ENCODE measurements at regions of chr3 and their contacts with region 1.

Region 1: DNA sequence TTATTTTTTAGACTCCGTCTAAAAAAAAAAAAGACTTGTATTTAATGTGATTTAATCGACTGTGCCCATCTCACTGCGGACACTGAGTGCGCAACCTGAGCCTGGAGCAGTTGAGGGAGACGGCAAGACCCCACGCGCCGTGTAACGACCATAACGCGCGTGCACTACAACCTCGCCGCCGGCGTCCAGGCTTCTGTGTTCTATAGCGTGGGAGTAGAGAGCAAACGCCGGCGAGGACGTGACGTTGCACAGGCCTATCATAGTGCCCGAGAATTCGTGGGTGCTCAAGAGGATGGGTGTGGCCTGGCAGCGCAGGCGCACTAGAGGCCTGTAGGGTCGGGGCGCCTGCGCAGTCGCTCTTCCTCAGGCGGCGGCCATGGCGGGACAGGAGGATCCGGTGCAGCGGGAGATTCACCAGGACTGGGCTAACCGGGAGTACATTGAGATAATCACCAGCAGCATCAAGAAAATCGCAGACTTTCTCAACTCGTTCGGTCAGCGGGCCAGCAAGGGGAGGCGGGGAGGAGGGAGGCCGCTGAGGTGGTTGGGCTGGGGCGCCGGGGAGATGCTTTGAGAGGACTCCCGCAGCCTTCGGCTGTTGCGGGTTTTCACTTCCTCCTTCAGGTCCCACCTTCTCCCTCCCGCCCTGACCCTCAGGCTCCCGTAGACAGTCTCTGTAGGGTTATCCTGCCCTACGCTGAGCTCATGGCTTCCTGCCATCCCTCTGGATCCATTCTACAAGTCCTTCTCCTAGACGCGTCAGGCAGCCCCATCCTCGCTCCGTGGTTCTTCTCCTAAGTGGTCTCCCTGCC is at the start of gene BRK1:
- DNase-seq: peak; percentile 85
- ATAC-seq: peak; percentile 96
- H3K4me3 Mint-ChIP-seq: peak within 1 kb of the TSS; percentile 100
- H3K27ac Mint-ChIP-seq: peak within 1 kb of the TSS; percentile 99
- H3K4me1 Mint-ChIP-seq: peaks cover 40% of the 10 kb centered on the region
- H3K27me3 Mint-ChIP-seq: no peaks in the 10 kb centered on the region
- CTCF ChIP-seq: no peak
- total RNA-seq, gene BRK1: 123 and 141 TPM in 2 replicates

Region 2: GRCh38 chr3:9986237-9986725 is 129.3 kb before region 1 on chr3:
- CTCF ChIA-PET with region 1: no interaction called
- POLR2A ChIA-PET with region 1: interaction called, 5 read pairs
- intact Hi-C with region 1: loop called (anchors 2 kb)
- DNase-seq: no peak
- ATAC-seq: peak; percentile 28
- H3K4me3 Mint-ChIP-seq: peak overlapping the region; percentile 98
- H3K27ac Mint-ChIP-seq: peak overlapping the region; percentile 100
- H3K4me1 Mint-ChIP-seq: peaks cover 24% of the 10 kb centered on the region
- H3K27me3 Mint-ChIP-seq: no peaks in the 10 kb centered on the region
- CTCF ChIP-seq: no peak

Region 3: DNA sequence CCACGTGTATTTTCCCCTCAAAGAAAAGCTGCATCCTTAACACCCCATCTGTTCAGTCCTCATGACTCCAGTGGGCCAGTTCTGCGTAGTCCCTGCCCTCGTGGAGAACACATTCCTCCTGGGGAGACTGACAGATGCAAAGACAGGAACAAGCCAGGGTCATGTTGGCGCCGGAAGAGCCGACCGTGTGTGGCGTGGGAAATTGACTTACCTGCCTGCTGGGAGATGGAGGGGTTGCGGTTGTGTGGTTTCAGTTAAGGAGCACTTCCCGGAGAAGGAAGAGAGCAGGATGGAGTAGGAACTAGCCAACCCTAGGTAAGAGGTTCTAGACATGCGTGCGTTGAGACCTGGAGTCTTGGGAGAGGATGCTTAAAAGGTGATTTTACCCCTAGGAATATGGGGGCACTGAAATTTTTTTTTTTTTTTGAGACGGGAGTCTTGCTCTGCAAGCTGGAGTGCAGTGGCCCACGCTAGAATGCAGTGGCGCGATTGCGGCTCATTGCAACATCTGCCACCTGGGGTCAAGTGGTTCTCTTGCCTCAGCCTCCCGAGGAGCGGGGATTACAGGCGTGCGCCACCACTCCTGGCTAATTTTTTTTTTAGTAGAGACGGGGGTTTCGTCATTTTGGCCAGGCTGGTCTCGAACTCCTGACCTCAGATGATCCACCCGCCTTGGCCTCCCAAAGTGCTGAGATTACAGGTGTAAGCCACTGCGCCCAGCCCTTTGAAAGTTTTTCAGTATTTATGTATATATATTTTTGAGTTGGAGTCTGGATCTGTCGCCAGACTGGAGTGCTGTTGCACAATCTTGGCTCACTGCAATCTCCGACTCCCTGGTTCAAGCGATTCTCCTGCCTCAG is 27.4 kb after region 1 on chr3:
- CTCF ChIA-PET with region 1: no interaction called
- POLR2A ChIA-PET with region 1: interaction called, 32 read pairs
- intact Hi-C with region 1: loop called (anchors 1 kb)
- DNase-seq: no peak
- ATAC-seq: no peak
- H3K4me3 Mint-ChIP-seq: peak overlapping the region; percentile 97
- H3K27ac Mint-ChIP-seq: peak overlapping the region; percentile 95
- H3K4me1 Mint-ChIP-seq: peaks cover 42% of the 10 kb centered on the region
- H3K27me3 Mint-ChIP-seq: no peaks in the 10 kb centered on the region
- CTCF ChIP-seq: no peak

Region 4: DNA sequence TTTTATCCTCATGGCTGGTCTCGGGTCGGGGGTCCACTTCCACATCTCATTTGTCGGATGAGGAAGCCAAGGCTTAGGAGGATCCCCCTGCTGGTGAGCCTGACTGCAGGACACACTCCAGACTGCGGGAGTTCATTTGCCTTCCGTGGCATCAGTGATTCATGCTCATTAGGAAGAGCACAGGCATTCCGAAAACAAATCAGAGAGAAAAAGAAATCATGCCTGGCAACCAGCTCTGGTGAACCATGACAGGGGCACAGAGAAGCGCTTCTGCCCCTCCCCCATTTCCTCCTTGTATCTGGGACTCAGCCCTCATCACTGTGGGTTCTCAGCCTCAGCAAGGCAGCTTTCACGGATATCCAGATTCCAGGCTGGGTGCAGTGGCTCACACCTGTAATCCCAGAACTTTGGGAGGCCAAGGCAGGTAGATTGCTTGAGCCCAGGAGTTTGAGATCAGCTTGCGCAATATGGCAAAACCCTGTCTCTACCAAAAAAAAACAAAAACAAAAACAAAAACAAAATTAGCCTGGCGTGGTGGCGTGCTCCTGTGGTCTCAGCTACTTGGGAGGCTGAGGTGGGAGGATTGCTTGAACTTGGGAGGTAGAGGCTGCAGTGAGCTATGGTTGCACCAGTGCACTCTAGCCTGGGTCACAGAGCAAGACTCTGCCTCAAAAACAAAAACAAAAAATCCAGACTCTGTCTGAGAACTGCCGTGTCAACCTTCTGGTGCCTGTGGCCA is 77.6 kb after region 1 on chr3:
- CTCF ChIA-PET with region 1: no interaction called
- POLR2A ChIA-PET with region 1: interaction called, 7 read pairs
- intact Hi-C with region 1: loop called (anchors 1 kb)
- DNase-seq: peak; percentile 53
- ATAC-seq: peak; percentile 58
- H3K4me3 Mint-ChIP-seq: peak overlapping the region; percentile 79
- H3K27ac Mint-ChIP-seq: peak overlapping the region; percentile 99
- H3K4me1 Mint-ChIP-seq: peaks cover 88% of the 10 kb centered on the region
- H3K27me3 Mint-ChIP-seq: no peaks in the 10 kb centered on the region
- CTCF ChIP-seq: no peak

Region 5: GRCh38 chr3:10263646-10264363 is 148.3 kb after region 1 on chr3:
- CTCF ChIA-PET with region 1: no interaction called
- POLR2A ChIA-PET with region 1: interaction called, 10 read pairs
- intact Hi-C with region 1: no loop called
- DNase-seq: no peak
- ATAC-seq: peak; percentile 89
- H3K4me3 Mint-ChIP-seq: no peak overlapping the region
- H3K27ac Mint-ChIP-seq: peak overlapping the region; percentile 38
- H3K4me1 Mint-ChIP-seq: peaks cover 41% of the 10 kb centered on the region
- H3K27me3 Mint-ChIP-seq: no peaks in the 10 kb centered on the region
- CTCF ChIP-seq: no peak

Region 6: DNA sequence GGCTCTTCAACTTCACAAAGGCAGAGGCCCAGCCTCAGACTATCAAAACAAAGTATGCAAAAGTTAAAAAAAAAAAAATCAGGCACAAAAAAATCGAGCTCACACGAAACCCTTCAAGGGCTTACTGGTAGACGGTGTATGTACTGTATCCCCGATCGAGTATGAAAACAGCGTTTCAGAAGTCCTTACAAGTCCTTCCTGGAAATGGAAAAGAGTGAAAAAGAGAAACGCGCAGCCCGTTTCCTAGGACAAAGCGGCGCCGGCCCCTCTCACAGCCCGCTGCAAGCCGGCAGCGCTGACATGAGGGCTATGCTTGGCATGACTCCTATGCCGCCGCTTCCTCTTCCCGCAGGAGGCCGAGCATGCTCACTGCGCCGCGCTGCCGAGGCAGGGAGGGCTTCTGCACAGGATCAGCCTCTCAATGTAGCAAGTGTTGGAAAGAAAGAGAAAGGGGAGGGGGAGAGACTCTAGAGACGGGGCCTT is 1528.1 kb after region 1 on chr3 and contains the start of gene VGLL4:
- CTCF ChIA-PET with region 1: no interaction called
- POLR2A ChIA-PET with region 1: no interaction called
- intact Hi-C with region 1: loop called (anchors 5 kb)
- DNase-seq: peak; percentile 66
- ATAC-seq: peak; percentile 68
- H3K4me3 Mint-ChIP-seq: peak within 1 kb of the TSS; percentile 99
- H3K27ac Mint-ChIP-seq: peak within 1 kb of the TSS; percentile 96
- H3K4me1 Mint-ChIP-seq: peaks cover 23% of the 10 kb centered on the region
- H3K27me3 Mint-ChIP-seq: no peaks in the 10 kb centered on the region
- CTCF ChIP-seq: no peak
- total RNA-seq, gene VGLL4: 19.2 and 19.3 TPM in 2 replicates

Measured in activated B cell treated with CpG ODN at 0.5 μM for 24 hours (primary cell).